ENCODE measurements at regions of chr7 and their contacts with region 1.

Region 1: GRCh38 chr7:12731214-12731656 is 43.8 kb downstream of the ARL4A start:
- DNase-seq: peak; percentile 69
- H3K4me3 ChIP-seq: no peak overlapping the region
- H3K27ac ChIP-seq: peak overlapping the region; percentile 26
- H3K4me1 ChIP-seq: peaks cover 13% of the 10 kb centered on the region
- H3K27me3 ChIP-seq: no peaks in the 10 kb centered on the region
- CTCF ChIP-seq: peak; percentile 9 to 62

Region 2: GRCh38 chr7:12638851-12639467 is 92.3 kb before region 1 on chr7:
- CTCF ChIA-PET with region 1: no interaction called
- dilution Hi-C with region 1: no loop called
- in situ Hi-C with region 1: no loop called
- intact Hi-C with region 1: loop called (anchors 2 kb)
- DNase-seq: peak; percentile 32
- H3K4me3 ChIP-seq: no peak overlapping the region
- H3K27ac ChIP-seq: no peak overlapping the region
- H3K4me1 ChIP-seq: no peaks in the 10 kb centered on the region
- H3K27me3 ChIP-seq: no peaks in the 10 kb centered on the region
- CTCF ChIP-seq: peak; percentile 56 to 61

Region 3: GRCh38 chr7:12757443-12757842 is 26.2 kb after region 1 on chr7:
- CTCF ChIA-PET with region 1: no interaction called
- dilution Hi-C with region 1: no loop called
- in situ Hi-C with region 1: no loop called
- intact Hi-C with region 1: no loop called
- DNase-seq: peak; percentile 32
- H3K4me3 ChIP-seq: no peak overlapping the region
- H3K27ac ChIP-seq: no peak overlapping the region
- H3K4me1 ChIP-seq: peaks cover 8% of the 10 kb centered on the region
- H3K27me3 ChIP-seq: no peaks in the 10 kb centered on the region
- CTCF ChIP-seq: no peak

Region 4: DNA sequence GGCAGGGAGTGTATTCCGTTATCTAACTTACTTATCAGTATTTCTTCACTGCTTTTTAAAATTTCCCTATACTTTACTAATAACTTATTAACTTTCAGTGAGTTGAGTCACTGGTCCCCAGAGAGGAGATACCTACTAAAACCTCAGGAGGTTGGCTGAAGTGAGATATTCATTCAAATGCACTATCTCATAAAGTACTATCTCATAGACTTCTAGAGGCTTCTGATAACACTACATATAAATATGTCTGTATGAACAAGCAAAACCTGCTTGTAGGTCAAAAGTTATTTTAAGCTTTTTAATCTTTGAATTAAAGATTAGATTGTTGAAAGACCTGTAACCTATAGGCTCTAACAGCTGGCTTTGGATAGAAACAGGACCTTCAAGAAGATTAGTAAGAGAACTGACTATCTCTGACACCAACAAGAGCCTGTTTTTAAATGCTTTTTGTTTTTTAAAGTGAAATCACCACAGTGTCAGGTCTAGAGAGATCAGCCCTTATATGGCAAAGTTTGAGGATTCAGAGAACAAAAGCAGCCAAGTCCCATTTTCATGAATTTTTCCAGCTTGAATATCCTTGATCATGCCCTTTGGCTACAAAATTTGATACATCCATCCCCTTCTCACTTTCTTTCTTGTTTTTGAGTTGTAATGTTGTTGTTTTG is 198.4 kb after region 1 on chr7:
- CTCF ChIA-PET with region 1: no interaction called
- dilution Hi-C with region 1: no loop called
- in situ Hi-C with region 1: no loop called
- intact Hi-C with region 1: loop called (anchors 10 kb)
- DNase-seq: no peak
- H3K4me3 ChIP-seq: no peak overlapping the region
- H3K27ac ChIP-seq: no peak overlapping the region
- H3K4me1 ChIP-seq: peaks cover 3% of the 10 kb centered on the region
- H3K27me3 ChIP-seq: no peaks in the 10 kb centered on the region
- CTCF ChIP-seq: no peak

Region 5: GRCh38 chr7:13117103-13117502 is 385.9 kb after region 1 on chr7:
- CTCF ChIA-PET with region 1: no interaction called
- dilution Hi-C with region 1: no loop called
- in situ Hi-C with region 1: no loop called
- intact Hi-C with region 1: loop called (anchors 1 kb)
- DNase-seq: no peak
- H3K4me3 ChIP-seq: no peak overlapping the region
- H3K27ac ChIP-seq: no peak overlapping the region
- H3K4me1 ChIP-seq: peaks cover 7% of the 10 kb centered on the region
- H3K27me3 ChIP-seq: no peaks in the 10 kb centered on the region
- CTCF ChIP-seq: peak; percentile 42 to 63

Region 6: GRCh38 chr7:13702251-13702650 is 971.0 kb after region 1 on chr7:
- CTCF ChIA-PET with region 1: no interaction called
- dilution Hi-C with region 1: no loop called
- in situ Hi-C with region 1: no loop called
- intact Hi-C with region 1: no loop called
- DNase-seq: no peak
- H3K4me3 ChIP-seq: no peak overlapping the region
- H3K27ac ChIP-seq: no peak overlapping the region
- H3K4me1 ChIP-seq: no peaks in the 10 kb centered on the region
- H3K27me3 ChIP-seq: no peaks in the 10 kb centered on the region
- CTCF ChIP-seq: no peak